SK-N-SH (cell line): ENCODE measurements at regions of chr17 and their contacts with region 1.

Region 1: GRCh38 chr17:61574542-61575174 is 16.4 kb downstream of the NACA2 start:
- DNase-seq: peak; percentile 76
- H3K4me3 ChIP-seq: no peak overlapping the region
- H3K27ac ChIP-seq: peak overlapping the region; percentile 7 to 56; a peak in 3 of 4 replicates
- H3K4me1 ChIP-seq: peaks cover 0 to 7% of the 10 kb centered on the region in 2 experiments; a peak in 2 of 4 replicates
- H3K27me3 ChIP-seq: no peaks in the 10 kb centered on the region
- CTCF ChIP-seq: peak; percentile 59
- EP300 ChIP-seq: no peak
- RAD21 ChIP-seq: peak; percentile 97

Region 2: GRCh38 chr17:60720763-60721531 is 853.7 kb before region 1 on chr17:
- CTCF ChIA-PET with region 1: interaction called, 12 read pairs
- POLR2A ChIA-PET with region 1: no interaction called
- DNase-seq: peak; percentile 66
- H3K4me3 ChIP-seq: peak overlapping the region in 1 of 2 experiments; percentile 25; a peak in 2 of 4 replicates
- H3K27ac ChIP-seq: peak overlapping the region; percentile 8 to 51; a peak in 2 of 4 replicates
- H3K4me1 ChIP-seq: peaks cover 0 to 5% of the 10 kb centered on the region in 2 experiments; a peak in 2 of 4 replicates
- H3K27me3 ChIP-seq: no peaks in the 10 kb centered on the region
- CTCF ChIP-seq: peak; percentile 100
- EP300 ChIP-seq: no peak
- RAD21 ChIP-seq: peak; percentile 98

Region 3: DNA sequence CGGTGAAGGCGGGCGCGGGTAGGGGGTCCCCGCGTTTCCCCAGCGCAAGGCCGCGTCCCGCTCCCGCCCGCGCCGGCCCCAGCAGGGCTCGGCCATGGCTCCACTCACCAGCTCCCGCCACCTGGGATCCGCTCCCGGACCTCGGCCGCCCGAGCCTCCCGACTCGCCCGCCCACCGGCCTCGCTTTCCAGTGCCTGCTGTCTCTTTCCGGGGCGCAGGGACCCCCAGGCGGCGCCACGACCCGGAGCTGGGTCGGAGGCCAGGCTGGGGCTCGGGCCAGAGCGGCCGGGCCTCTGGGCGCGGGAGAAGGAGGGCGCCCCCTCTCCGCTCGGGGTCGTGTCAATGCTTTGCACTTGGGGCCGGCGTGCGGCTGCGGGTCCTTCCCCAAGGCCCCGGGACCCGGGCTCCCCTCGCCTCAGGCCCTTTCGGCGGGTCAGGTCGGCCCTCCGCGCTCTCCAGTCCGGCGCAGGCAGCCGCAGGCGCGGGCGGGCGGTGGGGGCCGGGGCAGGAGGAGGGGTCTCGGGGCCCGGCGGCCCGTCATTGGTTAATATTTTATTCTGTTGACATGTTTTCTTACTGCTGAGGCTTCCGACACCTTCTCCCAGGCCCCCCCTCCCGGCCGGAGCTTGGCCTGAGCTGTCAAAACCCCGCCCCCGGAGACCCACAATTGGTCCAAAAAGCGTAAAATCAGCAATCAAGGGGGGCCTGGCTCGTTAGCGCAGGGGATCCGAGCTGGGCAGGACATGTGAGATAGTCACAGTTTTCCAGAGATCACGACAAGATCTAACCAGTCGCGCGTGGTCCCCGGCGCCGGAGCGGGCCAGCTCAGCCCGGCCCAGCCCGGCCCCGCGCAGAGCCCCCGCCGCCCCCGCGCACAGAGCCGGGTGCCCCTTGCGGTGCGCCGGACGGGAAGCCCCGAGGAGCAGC is 175.3 kb before region 1 on chr17 and contains the start of gene TBX2:
- CTCF ChIA-PET with region 1: interaction called, 13 read pairs
- POLR2A ChIA-PET with region 1: no interaction called
- DNase-seq: peak; percentile 98
- H3K4me3 ChIP-seq: peak within 1 kb of the TSS; percentile 96 to 100
- H3K27ac ChIP-seq: peak within 1 kb of the TSS; percentile 75 to 90
- H3K4me1 ChIP-seq: peaks cover 17 to 57% of the 10 kb centered on the region in 2 experiments; a peak in 3 of 4 replicates
- H3K27me3 ChIP-seq: no peaks in the 10 kb centered on the region
- CTCF ChIP-seq: no peak; the same call in 1 of the 2 replicates
- EP300 ChIP-seq: peak in 1 of 2 experiments; percentile 12; a peak in 1 of 4 replicates
- RAD21 ChIP-seq: peak; percentile 12
- polyA plus RNA-seq, gene TBX2: 37.8 and 57.8 TPM in 2 replicates

Region 4: GRCh38 chr17:61486135-61487120 is 88.2 kb before region 1 on chr17:
- CTCF ChIA-PET with region 1: interaction called, 11 read pairs
- POLR2A ChIA-PET with region 1: no interaction called
- DNase-seq: peak; percentile 80
- H3K4me3 ChIP-seq: no peak overlapping the region
- H3K27ac ChIP-seq: peak overlapping the region in 1 of 2 experiments; percentile 45; a peak in 2 of 4 replicates
- H3K4me1 ChIP-seq: peaks cover 0 to 48% of the 10 kb centered on the region in 2 experiments; a peak in 2 of 4 replicates
- H3K27me3 ChIP-seq: no peaks in the 10 kb centered on the region
- CTCF ChIP-seq: no peak
- EP300 ChIP-seq: 0 out of 4 replicates have a peak, but pooled peaks of 1 of the 2 experiments have one; percentile 25
- RAD21 ChIP-seq: no peak

Region 5: GRCh38 chr17:61556224-61557188 is 18.2 kb before region 1 on chr17:
- CTCF ChIA-PET with region 1: interaction called, 39 read pairs
- POLR2A ChIA-PET with region 1: no interaction called
- DNase-seq: peak; percentile 65
- H3K4me3 ChIP-seq: no peak overlapping the region
- H3K27ac ChIP-seq: peak overlapping the region in 1 of 2 experiments; percentile 78; a peak in 2 of 4 replicates
- H3K4me1 ChIP-seq: peaks cover 10 to 25% of the 10 kb centered on the region in 2 experiments; a peak in 3 of 4 replicates
- H3K27me3 ChIP-seq: no peaks in the 10 kb centered on the region
- CTCF ChIP-seq: no peak
- EP300 ChIP-seq: peak in 1 of 2 experiments; percentile 83; a peak in 2 of 4 replicates
- RAD21 ChIP-seq: no peak